H1 (cell line): ENCODE measurements at regions of chr16 and their contacts with region 1.

Region 1: GRCh38 chr16:66830422-66831404 is at the start of gene NAE1:
- DNase-seq: peak; percentile 79 to 95
- H3K4me3 ChIP-seq: peak within 1 kb of the TSS; percentile 66 to 86 (median 84)
- H3K27ac ChIP-seq: peak within 1 kb of the TSS; percentile 93
- H3K4me1 ChIP-seq: peaks cover 0 to 5% (median 3%) of the 10 kb centered on the region in 4 experiments; a peak in 2 of 7 replicates
- H3K27me3 ChIP-seq: no peaks in the 10 kb centered on the region; a peak in 2 of 7 replicates
- CTCF ChIP-seq: peak; percentile 97 to 99 (median 98)
- EP300 ChIP-seq: peak in 1 of 2 experiments; percentile 28; a peak in 1 of 3 replicates
- POLR2A ChIP-seq: peak; percentile 91 to 95
- RAD21 ChIP-seq: peak; percentile 69 to 73
- total RNA-seq, gene NAE1: 145 and 155 TPM in 2 replicates

Region 2: GRCh38 chr16:66459878-66460277 is 370.8 kb before region 1 on chr16:
- CTCF ChIA-PET with region 1: no interaction called
- POLR2A ChIA-PET with region 1: no interaction called
- DNase-seq: peak in 1 of 2 experiments; percentile 70
- H3K4me3 ChIP-seq: no peak overlapping the region
- H3K27ac ChIP-seq: no peak overlapping the region
- H3K4me1 ChIP-seq: peaks cover 0 to 4% (median 1%) of the 10 kb centered on the region in 4 experiments; a peak in 1 of 7 replicates
- H3K27me3 ChIP-seq: no peaks in the 10 kb centered on the region
- CTCF ChIP-seq: no peak
- EP300 ChIP-seq: no peak
- POLR2A ChIP-seq: no peak
- RAD21 ChIP-seq: no peak

Region 3: DNA sequence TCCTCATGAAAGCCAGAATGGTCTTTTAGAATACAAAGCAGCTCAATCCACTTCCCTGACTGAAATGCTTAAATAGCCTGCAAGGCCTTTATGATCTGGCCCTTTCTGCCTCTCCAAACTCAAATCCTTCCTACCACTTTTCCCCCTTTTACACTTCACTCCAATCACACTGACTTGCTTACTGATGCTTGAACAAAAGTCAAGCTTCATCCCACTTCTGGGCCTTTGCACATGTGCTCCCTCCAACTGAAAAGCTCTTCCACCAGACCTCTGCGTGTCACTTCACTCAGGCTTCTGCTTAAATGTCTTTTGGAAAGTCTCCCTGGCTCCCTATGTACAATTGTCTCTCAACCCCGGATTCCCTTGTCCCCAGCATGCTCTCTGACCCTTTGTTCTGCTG is 16.0 kb before region 1 on chr16:
- CTCF ChIA-PET with region 1: interaction called, 5 read pairs
- POLR2A ChIA-PET with region 1: interaction called, 67 read pairs
- DNase-seq: no peak
- H3K4me3 ChIP-seq: no peak overlapping the region
- H3K27ac ChIP-seq: no peak overlapping the region
- H3K4me1 ChIP-seq: no peaks in the 10 kb centered on the region
- H3K27me3 ChIP-seq: no peaks in the 10 kb centered on the region
- CTCF ChIP-seq: no peak
- EP300 ChIP-seq: no peak
- POLR2A ChIP-seq: no peak
- RAD21 ChIP-seq: no peak

Region 4: DNA sequence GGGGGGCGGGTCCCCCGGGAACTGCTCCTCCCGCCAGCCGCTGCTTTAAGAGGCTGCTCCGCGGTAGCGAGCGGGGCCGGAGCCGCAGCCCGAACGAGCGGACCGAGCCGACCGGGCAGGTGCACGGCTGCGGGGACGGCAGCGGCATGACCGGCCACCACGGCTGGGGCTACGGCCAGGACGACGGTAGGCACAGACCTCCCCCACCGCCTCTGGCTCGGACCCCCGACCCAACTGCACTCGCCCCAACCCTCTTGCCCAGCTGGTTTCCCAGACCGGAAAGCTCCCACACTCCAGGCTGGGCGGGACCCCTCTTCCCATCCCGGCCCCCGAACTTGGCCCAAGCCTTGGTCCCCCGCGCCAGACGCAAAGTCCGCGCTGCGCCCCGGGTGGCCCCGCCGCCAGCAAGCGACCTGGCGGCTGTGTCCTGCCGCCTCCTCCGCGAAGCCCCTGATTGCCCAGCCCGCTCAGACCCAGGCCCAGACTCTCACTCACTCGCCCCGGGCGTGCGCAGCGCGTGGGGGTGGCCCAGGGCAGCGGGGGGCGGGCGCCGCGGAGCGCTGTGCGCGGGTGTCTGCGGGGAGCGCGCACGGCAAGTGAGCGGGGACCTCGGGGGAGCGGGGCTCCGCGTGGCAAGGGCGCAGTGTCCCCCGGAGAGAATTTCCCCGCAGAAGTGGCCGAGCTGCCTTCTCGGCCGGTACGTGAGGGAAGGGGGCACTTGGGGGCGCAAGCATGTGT is 13.8 kb after region 1 on chr16 and contains the start of gene CA7:
- CTCF ChIA-PET with region 1: interaction called, 162 read pairs
- POLR2A ChIA-PET with region 1: interaction called, 26 read pairs
- DNase-seq: peak in 1 of 2 experiments; percentile 79
- H3K4me3 ChIP-seq: peak within 1 kb of the TSS; percentile 46 to 75 (median 62)
- H3K27ac ChIP-seq: no peak within 1 kb of the TSS
- H3K4me1 ChIP-seq: peaks cover 0 to 2% (median 0%) of the 10 kb centered on the region in 4 experiments; a peak in 3 of 7 replicates
- H3K27me3 ChIP-seq: peaks cover 14 to 45% (median 36%) of the 10 kb centered on the region in 4 experiments
- CTCF ChIP-seq: no peak
- EP300 ChIP-seq: no peak
- POLR2A ChIP-seq: no peak
- RAD21 ChIP-seq: no peak
- total RNA-seq, gene CA7: 1.7 and 1.8 TPM in 2 replicates

Region 5: GRCh38 chr16:66850115-66850815 is 19.6 kb after region 1 on chr16:
- CTCF ChIA-PET with region 1: interaction called, 162 read pairs
- POLR2A ChIA-PET with region 1: interaction called, 26 read pairs
- DNase-seq: no peak
- H3K4me3 ChIP-seq: no peak overlapping the region
- H3K27ac ChIP-seq: no peak overlapping the region
- H3K4me1 ChIP-seq: peaks cover 0 to 2% (median 0%) of the 10 kb centered on the region in 4 experiments; a peak in 1 of 7 replicates
- H3K27me3 ChIP-seq: peaks cover 7 to 19% (median 12%) of the 10 kb centered on the region in 4 experiments
- CTCF ChIP-seq: no peak
- EP300 ChIP-seq: no peak
- POLR2A ChIP-seq: no peak
- RAD21 ChIP-seq: no peak

Region 6: GRCh38 chr16:66858740-66859396 is 28.2 kb after region 1 on chr16:
- CTCF ChIA-PET with region 1: interaction called, 11 read pairs
- POLR2A ChIA-PET with region 1: interaction called, 10 read pairs
- DNase-seq: no peak
- H3K4me3 ChIP-seq: no peak overlapping the region
- H3K27ac ChIP-seq: no peak overlapping the region
- H3K4me1 ChIP-seq: no peaks in the 10 kb centered on the region
- H3K27me3 ChIP-seq: no peaks in the 10 kb centered on the region
- CTCF ChIP-seq: no peak
- EP300 ChIP-seq: no peak
- POLR2A ChIP-seq: no peak
- RAD21 ChIP-seq: no peak

Region 7: GRCh38 chr16:66880288-66881013 is 49.7 kb after region 1 on chr16 and contains the start of gene PDP2:
- CTCF ChIA-PET with region 1: interaction called, 3 read pairs
- POLR2A ChIA-PET with region 1: interaction called, 10 read pairs
- DNase-seq: peak; percentile 92 to 97
- H3K4me3 ChIP-seq: peak within 1 kb of the TSS; percentile 71 to 84 (median 80)
- H3K27ac ChIP-seq: peak within 1 kb of the TSS; percentile 64; the same call in 1 of the 2 replicates
- H3K4me1 ChIP-seq: peaks cover 0 to 10% (median 3%) of the 10 kb centered on the region in 4 experiments; a peak in 3 of 7 replicates
- H3K27me3 ChIP-seq: peaks cover 0 to 3% (median 0%) of the 10 kb centered on the region in 4 experiments; a peak in 1 of 7 replicates
- CTCF ChIP-seq: no peak
- EP300 ChIP-seq: no peak
- POLR2A ChIP-seq: peak; percentile 51 to 67
- RAD21 ChIP-seq: no peak
- total RNA-seq, gene PDP2: 36.0 and 36.5 TPM in 2 replicates

Region 8: DNA sequence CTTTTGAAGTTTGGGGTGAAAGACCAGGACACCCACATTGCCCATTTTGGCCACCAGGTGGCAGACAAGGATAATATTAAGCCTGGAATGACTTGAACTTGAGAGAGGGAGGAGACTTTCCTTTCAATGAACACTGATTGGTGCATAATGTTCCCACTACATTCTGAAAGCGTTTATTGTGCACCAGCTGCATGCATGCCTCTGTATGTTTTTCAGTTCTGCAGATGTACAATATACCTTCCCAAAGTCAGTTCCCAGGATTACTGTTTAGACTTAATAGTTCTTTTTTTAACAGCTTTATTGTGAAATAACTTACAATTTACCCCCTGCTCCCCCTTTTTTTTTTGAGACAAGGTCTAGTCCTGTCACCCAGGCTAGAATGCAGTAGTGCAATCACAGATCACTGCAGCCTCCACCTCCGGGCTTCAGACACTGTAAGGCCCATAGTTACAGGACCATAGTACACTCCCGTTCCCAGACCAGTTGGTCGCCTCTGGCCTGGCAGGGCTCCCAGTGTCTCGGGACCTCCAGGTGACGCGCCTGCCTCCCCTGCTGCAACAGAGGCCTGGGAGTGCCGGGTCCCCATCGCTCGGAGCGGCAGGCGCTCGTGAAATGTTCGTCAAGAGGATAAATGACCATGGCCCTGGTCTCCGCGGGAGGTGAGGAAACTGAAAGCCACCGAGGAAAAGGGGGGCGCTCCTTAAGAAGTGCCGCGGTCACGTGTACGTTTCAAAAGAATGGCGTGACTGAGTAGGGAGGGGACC is 116.8 kb after region 1 on chr16:
- CTCF ChIA-PET with region 1: no interaction called
- POLR2A ChIA-PET with region 1: no interaction called
- DNase-seq: peak; percentile 59 to 94
- H3K4me3 ChIP-seq: peak overlapping the region; percentile 23 to 53 (median 27); a peak in 6 of 8 replicates
- H3K27ac ChIP-seq: no peak overlapping the region
- H3K4me1 ChIP-seq: peaks cover 0 to 5% (median 1%) of the 10 kb centered on the region in 4 experiments; a peak in 2 of 7 replicates
- H3K27me3 ChIP-seq: peaks cover 10 to 34% (median 32%) of the 10 kb centered on the region in 4 experiments
- CTCF ChIP-seq: peak; percentile 54 to 93 (median 74)
- EP300 ChIP-seq: no peak
- POLR2A ChIP-seq: no peak
- RAD21 ChIP-seq: peak; percentile 76 to 81